ENCODE measurements at regions of chr16 and their contacts with region 1.

Region 1: DNA sequence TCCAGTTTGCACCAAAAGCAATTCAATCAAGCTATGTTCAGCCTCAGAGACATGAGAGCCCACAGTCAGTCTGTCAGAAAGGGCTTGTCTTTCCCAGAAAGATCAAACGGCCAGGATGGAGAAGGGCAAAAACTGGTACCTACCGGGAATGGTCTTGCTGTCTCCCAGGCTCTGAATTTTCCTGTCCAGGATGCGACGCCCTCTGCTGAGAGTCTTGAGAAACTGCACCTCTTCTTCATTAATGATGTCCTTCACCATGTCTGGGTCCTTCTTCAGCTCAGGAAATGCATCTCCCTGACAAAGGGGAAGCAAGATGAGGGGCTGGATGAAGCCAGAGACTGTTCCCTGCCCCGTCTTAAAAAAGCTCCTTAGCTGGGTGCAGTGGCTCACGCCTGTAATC is 15.8 kb upstream of the EXOSC6 start:
- DNase-seq: peak; percentile 65
- H3K4me3 ChIP-seq: no peak overlapping the region
- H3K27ac ChIP-seq: no peak overlapping the region
- H3K4me1 ChIP-seq: no peaks in the 10 kb centered on the region
- H3K27me3 ChIP-seq: no peaks in the 10 kb centered on the region
- CTCF ChIP-seq: peak; percentile 71 to 76
- POLR2A ChIP-seq: no peak

Region 2: GRCh38 chr16:70162041-70162451 is 105.5 kb before region 1 on chr16:
- CTCF ChIA-PET with region 1: interaction called, 40 read pairs
- POLR2A ChIA-PET with region 1: no interaction called
- dilution Hi-C with region 1: no loop called
- intact Hi-C with region 1: no loop called
- DNase-seq: peak; percentile 60
- H3K4me3 ChIP-seq: no peak overlapping the region
- H3K27ac ChIP-seq: no peak overlapping the region
- H3K4me1 ChIP-seq: peaks cover 9% of the 10 kb centered on the region
- H3K27me3 ChIP-seq: no peaks in the 10 kb centered on the region
- CTCF ChIP-seq: no peak
- POLR2A ChIP-seq: no peak

Region 3: DNA sequence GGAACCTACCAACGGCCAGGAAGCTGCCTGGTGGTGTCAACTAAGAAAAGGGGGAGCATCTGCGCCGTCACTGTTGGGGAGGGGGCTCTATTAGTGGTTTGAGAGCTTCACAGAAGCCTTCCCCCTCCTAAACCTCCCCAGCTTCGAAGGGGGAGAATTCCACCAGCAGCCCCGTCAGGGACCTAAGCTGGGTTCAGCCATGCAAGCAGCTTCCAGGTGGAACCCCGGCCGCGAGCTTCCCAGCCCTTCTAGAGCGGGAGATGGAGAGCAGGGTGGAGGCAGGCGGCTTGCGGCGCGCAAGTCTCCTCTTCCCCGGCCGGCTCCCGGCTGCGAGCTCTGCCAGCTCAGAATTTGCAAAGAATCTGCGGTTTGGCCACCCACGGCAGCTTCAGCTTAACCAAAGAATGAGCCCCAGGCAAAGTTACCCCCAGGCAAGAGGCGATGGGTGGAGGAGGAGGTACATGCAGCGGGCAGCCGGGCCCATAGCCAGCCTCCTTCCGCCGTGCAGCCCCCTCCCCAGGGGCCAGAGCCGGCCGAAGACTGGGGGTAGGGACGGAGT is 112.9 kb after region 1 on chr16:
- CTCF ChIA-PET with region 1: no interaction called
- POLR2A ChIA-PET with region 1: no interaction called
- dilution Hi-C with region 1: no loop called
- intact Hi-C with region 1: no loop called
- DNase-seq: peak; percentile 46
- H3K4me3 ChIP-seq: peak overlapping the region; percentile 51 to 59 (median 54)
- H3K27ac ChIP-seq: no peak overlapping the region
- H3K4me1 ChIP-seq: peaks cover 6% of the 10 kb centered on the region
- H3K27me3 ChIP-seq: no peaks in the 10 kb centered on the region
- CTCF ChIP-seq: no peak
- POLR2A ChIP-seq: no peak